ENCODE measurements at regions of chr6 and their contacts with region 1.

Region 1: GRCh38 chr6:52718550-52718949 is 44.7 kb downstream of the GSTA2 start:
- DNase-seq: no peak
- H3K4me3 ChIP-seq: no peak overlapping the region
- H3K27ac ChIP-seq: no peak overlapping the region
- H3K4me1 ChIP-seq: no peaks in the 10 kb centered on the region
- CTCF ChIP-seq: no peak

Region 2: DNA sequence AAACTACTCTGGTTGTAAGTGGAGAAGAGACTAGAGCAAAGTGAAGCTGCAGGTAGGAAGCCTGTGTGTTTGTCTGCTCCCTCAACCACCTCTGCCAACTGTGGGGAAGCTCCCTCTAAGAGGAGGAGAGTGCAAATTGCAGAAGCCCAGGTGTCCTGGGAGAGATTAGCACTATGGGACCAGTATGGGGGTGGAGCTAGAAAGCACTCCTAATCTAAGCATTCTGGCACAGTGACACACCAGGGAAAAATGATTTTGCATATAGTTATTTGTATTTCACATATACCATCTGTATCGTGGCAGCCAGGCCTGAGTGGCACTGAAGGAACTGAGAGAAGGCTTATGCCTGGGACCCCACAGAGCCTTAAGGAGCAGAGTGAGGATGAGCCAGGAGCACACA is 72.3 kb after region 1 on chr6:
- CTCF ChIA-PET with region 1: no interaction called
- POLR2A ChIA-PET with region 1: no interaction called
- intact Hi-C with region 1: no loop called
- DNase-seq: no peak
- H3K4me3 ChIP-seq: no peak overlapping the region
- H3K27ac ChIP-seq: no peak overlapping the region
- H3K4me1 ChIP-seq: no peaks in the 10 kb centered on the region
- CTCF ChIP-seq: no peak

Region 3: DNA sequence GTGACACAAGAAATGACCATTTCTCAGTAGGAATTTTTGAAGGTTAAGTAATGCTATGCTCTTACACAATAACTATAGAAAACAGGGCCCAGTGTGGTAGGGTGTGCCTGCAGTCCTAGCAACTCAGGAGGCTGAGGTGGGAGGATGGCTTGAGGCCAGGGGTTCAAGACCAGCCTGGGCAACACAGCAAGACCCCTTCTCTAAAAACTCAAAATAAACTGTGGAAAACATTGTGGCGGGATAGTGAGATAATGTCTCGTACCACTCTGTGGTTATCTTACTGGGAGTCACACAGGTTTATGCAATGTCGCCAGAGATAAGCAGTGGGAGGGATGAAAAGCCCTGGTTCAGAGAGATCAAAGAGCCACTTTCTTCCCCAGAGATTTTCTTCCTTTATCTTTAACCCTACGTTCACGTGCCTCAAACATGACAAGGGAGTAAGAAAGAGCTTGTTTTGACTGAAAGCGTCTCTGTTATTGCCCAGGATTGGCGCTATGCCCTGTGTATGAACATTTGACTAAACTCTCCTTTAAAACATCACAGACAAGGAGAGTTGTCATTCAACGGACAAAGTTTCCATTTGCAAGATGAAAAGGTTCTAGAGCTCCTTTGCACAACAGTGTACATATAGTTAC is 416.2 kb after region 1 on chr6:
- CTCF ChIA-PET with region 1: no interaction called
- POLR2A ChIA-PET with region 1: interaction called, 12 read pairs
- intact Hi-C with region 1: no loop called
- DNase-seq: no peak
- H3K4me3 ChIP-seq: no peak overlapping the region
- H3K27ac ChIP-seq: no peak overlapping the region
- H3K4me1 ChIP-seq: no peaks in the 10 kb centered on the region
- CTCF ChIP-seq: no peak

Measured in OCI-LY7 (cell line).